AG04449 (cell line): ENCODE measurements at regions of chr6 and their contacts with region 1.

Region 1: DNA sequence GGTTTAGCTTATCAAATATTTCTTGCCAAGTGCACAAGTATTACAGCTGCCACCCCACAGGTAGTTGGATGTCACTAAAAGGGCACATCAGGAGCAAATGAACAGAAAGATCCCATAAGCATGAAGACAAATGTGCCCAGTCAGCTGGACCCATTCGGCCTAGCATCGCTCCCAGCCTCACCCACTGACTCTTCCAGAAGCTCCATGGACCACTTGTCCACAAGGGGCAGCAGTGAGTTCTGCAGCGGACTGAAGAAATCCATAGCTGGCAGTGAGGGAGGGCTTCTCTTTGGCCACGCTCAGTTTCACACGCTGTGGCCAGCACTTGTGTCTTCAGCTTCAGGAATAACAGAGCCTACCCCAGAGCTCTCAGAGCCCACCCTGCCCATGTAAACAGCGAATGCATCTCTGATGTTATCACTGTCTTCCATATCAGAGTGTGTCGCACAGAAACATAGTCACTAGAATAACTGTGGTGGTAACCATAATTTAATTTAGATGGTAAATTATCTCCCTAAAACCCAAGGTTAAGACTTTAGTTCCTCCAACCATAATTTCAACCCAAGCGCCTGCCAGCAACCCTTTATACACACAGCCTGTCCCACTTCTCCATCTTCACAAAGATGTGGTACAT is 15.8 kb downstream of the CGA start:
- DNase-seq: no peak
- H3K4me3 ChIP-seq: no peak overlapping the region
- CTCF ChIP-seq: peak; percentile 85

Region 2: GRCh38 chr6:87066449-87067333 is 12.4 kb before region 1 on chr6:
- CTCF ChIA-PET with region 1: interaction called, 59 read pairs
- POLR2A ChIA-PET with region 1: no interaction called
- DNase-seq: peak; percentile 21
- H3K4me3 ChIP-seq: no peak overlapping the region
- CTCF ChIP-seq: peak; percentile 39

Region 3: GRCh38 chr6:87164004-87164403 is 84.9 kb after region 1 on chr6:
- CTCF ChIA-PET with region 1: no interaction called
- POLR2A ChIA-PET with region 1: no interaction called
- DNase-seq: no peak
- H3K4me3 ChIP-seq: no peak overlapping the region
- CTCF ChIP-seq: no peak